ENCODE measurements at regions of chr11 and their contacts with region 1.

Region 1: GRCh38 chr11:36746886-36747710 is 149.1 kb upstream of the RAG2 start:
- DNase-seq: peak; percentile 45 to 84 (median 68)
- ATAC-seq: peak; percentile 100
- H3K4me3 ChIP-seq: no peak overlapping the region
- H3K4me3 Mint-ChIP-seq: no peak overlapping the region
- H3K27ac ChIP-seq: no peak overlapping the region
- H3K27ac Mint-ChIP-seq: no peak overlapping the region
- H3K4me1 ChIP-seq: no peaks in the 10 kb centered on the region
- H3K4me1 Mint-ChIP-seq: peaks cover 0 to 9% (median 3%) of the 10 kb centered on the region in 7 donors
- H3K27me3 ChIP-seq: no peaks in the 10 kb centered on the region
- H3K27me3 Mint-ChIP-seq: peaks cover 21 to 30% (median 25%) of the 10 kb centered on the region in 5 donors

Region 2: DNA sequence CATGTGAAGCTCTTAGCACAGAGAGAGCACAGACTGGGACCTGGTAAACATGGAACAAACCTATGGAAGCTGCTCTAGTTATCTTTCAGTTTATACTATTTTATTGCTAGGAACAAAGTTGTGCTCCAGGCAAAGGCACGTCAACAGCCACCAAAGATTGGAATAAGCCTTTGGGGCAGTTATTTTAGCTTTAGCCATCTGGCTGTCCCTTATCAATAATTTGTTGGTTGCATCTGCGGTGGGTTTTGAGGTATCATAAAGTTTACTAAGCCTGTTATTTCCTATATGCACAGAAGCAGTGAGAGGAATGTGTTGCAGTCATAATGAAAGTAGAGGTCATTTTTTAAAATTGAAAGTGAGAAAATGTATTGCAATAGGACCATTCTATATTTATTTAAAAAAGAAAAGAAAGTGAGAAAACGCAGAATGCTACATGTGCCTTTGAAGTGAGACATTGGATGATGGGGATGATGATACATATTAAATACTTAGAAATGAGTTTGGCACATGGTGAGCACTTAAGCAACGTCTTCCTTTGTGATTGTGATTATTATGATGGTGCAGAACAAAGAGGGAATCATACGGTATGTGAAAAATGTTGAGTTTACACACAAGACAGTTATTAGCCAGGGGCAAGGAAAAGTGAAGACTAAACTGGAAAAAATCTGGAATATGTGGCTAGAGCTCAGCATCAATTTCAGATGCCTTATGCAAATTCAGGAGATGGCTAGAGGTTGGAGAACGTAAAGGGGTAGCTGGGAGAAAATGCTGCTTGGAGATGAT is 392.7 kb before region 1 on chr11:
- CTCF ChIA-PET with region 1: no interaction called
- POLR2A ChIA-PET with region 1: no interaction called
- intact Hi-C with region 1: no loop called
- DNase-seq: no peak
- ATAC-seq: no peak
- H3K4me3 ChIP-seq: no peak overlapping the region
- H3K4me3 Mint-ChIP-seq: peak overlapping the region in 1 of 10 donors; percentile 45
- H3K27ac ChIP-seq: no peak overlapping the region
- H3K27ac Mint-ChIP-seq: peak overlapping the region in 1 of 9 donors; percentile 18
- H3K4me1 ChIP-seq: peaks cover 0 to 36% of the 10 kb centered on the region in 2 donors
- H3K4me1 Mint-ChIP-seq: peaks cover 0 to 56% (median 4%) of the 10 kb centered on the region in 7 donors
- H3K27me3 ChIP-seq: no peaks in the 10 kb centered on the region
- H3K27me3 Mint-ChIP-seq: peaks cover 9 to 35% (median 25%) of the 10 kb centered on the region in 5 donors

Region 3: GRCh38 chr11:36564376-36565030 is 182.6 kb before region 1 on chr11:
- CTCF ChIA-PET with region 1: interaction called, 28 read pairs
- POLR2A ChIA-PET with region 1: no interaction called
- intact Hi-C with region 1: loop called (anchors 1 kb)
- DNase-seq: peak in 7 of 9 donors; percentile 7 to 55 (median 33)
- ATAC-seq: peak; percentile 75
- H3K4me3 ChIP-seq: no peak overlapping the region
- H3K4me3 Mint-ChIP-seq: peak overlapping the region; percentile 27 to 87 (median 75)
- H3K27ac ChIP-seq: no peak overlapping the region
- H3K27ac Mint-ChIP-seq: no peak overlapping the region
- H3K4me1 ChIP-seq: peaks cover 0 to 7% of the 10 kb centered on the region in 2 donors
- H3K4me1 Mint-ChIP-seq: peaks cover 4 to 14% (median 6%) of the 10 kb centered on the region in 7 donors
- H3K27me3 ChIP-seq: no peaks in the 10 kb centered on the region
- H3K27me3 Mint-ChIP-seq: peaks cover 24 to 65% (median 34%) of the 10 kb centered on the region in 5 donors

Region 4: DNA sequence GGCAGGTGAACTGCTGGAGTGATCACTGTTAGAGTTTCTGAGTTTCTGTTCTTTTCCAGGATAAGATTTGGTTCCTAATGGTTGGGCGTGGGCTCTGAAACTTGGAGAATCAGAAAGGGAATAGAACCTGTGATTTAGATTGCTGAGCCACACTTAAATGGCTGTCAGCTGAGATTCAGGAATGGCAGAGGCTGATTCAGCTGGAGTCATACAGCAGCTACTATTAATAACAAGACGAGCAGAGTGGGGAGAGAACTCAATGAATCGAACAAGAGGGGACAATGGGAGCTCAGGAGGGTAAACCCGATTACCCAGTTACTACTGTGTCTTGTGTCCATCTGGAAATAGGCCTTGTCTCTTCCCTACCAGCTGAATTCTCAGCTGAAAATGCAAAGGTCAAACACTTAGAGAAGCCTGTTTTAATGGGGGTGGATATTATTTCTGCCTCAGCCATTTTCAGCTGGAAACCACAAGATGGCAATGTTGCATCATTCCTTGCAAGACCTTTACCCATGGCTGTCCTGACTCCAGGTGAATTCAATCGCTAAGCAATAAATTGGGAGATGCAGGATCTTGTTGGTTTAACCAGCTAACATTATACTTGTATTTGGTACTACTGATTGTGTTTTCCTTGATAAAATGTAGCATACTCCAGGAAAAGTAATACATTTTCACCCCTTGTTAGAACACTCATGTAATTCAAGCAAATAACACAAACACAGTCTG is 44.6 kb before region 1 on chr11:
- CTCF ChIA-PET with region 1: interaction called, 3 read pairs
- POLR2A ChIA-PET with region 1: no interaction called
- intact Hi-C with region 1: loop called (anchors 1 kb)
- DNase-seq: peak in 1 of 9 donors; percentile 3
- ATAC-seq: peak; percentile 44
- H3K4me3 ChIP-seq: no peak overlapping the region
- H3K4me3 Mint-ChIP-seq: no peak overlapping the region
- H3K27ac ChIP-seq: no peak overlapping the region
- H3K27ac Mint-ChIP-seq: no peak overlapping the region
- H3K4me1 ChIP-seq: no peaks in the 10 kb centered on the region
- H3K4me1 Mint-ChIP-seq: no peaks in the 10 kb centered on the region
- H3K27me3 ChIP-seq: no peaks in the 10 kb centered on the region
- H3K27me3 Mint-ChIP-seq: peaks cover 4 to 64% (median 40%) of the 10 kb centered on the region in 5 donors

Region 5: GRCh38 chr11:36997656-36998055 is 250.6 kb after region 1 on chr11:
- CTCF ChIA-PET with region 1: no interaction called
- POLR2A ChIA-PET with region 1: no interaction called
- intact Hi-C with region 1: no loop called
- DNase-seq: no peak
- ATAC-seq: no peak
- H3K4me3 ChIP-seq: no peak overlapping the region
- H3K4me3 Mint-ChIP-seq: no peak overlapping the region
- H3K27ac ChIP-seq: no peak overlapping the region
- H3K27ac Mint-ChIP-seq: no peak overlapping the region
- H3K4me1 ChIP-seq: no peaks in the 10 kb centered on the region
- H3K4me1 Mint-ChIP-seq: no peaks in the 10 kb centered on the region
- H3K27me3 ChIP-seq: no peaks in the 10 kb centered on the region
- H3K27me3 Mint-ChIP-seq: no peaks in the 10 kb centered on the region